ENCODE measurements at regions of chr12 and their contacts with region 1.

Region 1: GRCh38 chr12:26188127-26188526 is 7.2 kb upstream of the SSPN start:
- DNase-seq: no peak
- H3K4me3 Mint-ChIP-seq: no peak overlapping the region
- H3K27ac Mint-ChIP-seq: peak overlapping the region; percentile 38
- H3K4me1 Mint-ChIP-seq: peaks cover 38% of the 10 kb centered on the region
- H3K27me3 Mint-ChIP-seq: no peaks in the 10 kb centered on the region
- CTCF ChIP-seq: no peak

Region 2: DNA sequence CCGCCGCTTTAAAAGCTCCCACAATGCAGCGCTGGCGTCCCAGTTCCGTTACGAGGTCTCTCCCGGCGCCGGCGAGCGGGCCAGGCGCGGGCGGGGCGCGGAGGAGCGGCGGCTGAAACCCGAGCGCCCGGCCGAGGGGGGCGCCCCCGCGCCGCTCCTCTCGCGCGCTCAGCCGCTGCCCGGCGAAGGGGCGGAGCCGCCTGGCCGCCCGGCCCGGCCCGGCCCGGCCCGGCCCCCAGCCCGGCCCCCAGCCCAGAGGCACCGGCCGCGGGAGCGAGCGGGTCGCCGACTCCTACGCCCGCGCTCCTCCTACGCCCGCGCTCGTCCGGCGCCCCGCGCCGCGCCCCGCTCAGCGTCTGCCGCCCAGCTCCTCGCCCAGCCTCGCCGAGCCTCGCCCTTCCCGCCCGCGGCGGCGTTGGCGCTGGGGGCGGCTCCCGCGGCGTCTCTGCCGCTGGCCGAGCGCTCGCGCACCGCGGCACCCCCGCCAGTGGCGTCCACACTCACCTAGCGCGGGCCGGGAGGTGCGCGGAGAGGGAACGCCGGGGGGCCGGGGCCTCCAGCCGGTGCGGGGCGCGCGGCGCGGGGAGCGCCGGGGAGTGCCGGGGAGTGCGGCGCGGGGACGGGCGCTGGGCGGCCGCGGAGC is 229.6 kb before region 1 on chr12 and contains the start of gene RASSF8:
- CTCF ChIA-PET with region 1: no interaction called
- intact Hi-C with region 1: no loop called
- DNase-seq: peak; percentile 80
- H3K4me3 Mint-ChIP-seq: peak within 1 kb of the TSS; percentile 82
- H3K27ac Mint-ChIP-seq: peak within 1 kb of the TSS; percentile 56
- H3K4me1 Mint-ChIP-seq: peaks cover 25% of the 10 kb centered on the region
- H3K27me3 Mint-ChIP-seq: no peaks in the 10 kb centered on the region
- CTCF ChIP-seq: no peak
- total RNA-seq, gene RASSF8: 17.4 and 26.6 TPM in 2 replicates

Region 3: GRCh38 chr12:26126340-26127284 is 61.5 kb before region 1 on chr12:
- CTCF ChIA-PET with region 1: interaction called, 4 read pairs
- intact Hi-C with region 1: loop called (anchors 5 kb)
- DNase-seq: peak; percentile 86
- H3K4me3 Mint-ChIP-seq: peak overlapping the region; percentile 79
- H3K27ac Mint-ChIP-seq: peak overlapping the region; percentile 92
- H3K4me1 Mint-ChIP-seq: peaks cover 21% of the 10 kb centered on the region
- H3K27me3 Mint-ChIP-seq: peaks cover 18% of the 10 kb centered on the region
- CTCF ChIP-seq: no peak

Region 4: DNA sequence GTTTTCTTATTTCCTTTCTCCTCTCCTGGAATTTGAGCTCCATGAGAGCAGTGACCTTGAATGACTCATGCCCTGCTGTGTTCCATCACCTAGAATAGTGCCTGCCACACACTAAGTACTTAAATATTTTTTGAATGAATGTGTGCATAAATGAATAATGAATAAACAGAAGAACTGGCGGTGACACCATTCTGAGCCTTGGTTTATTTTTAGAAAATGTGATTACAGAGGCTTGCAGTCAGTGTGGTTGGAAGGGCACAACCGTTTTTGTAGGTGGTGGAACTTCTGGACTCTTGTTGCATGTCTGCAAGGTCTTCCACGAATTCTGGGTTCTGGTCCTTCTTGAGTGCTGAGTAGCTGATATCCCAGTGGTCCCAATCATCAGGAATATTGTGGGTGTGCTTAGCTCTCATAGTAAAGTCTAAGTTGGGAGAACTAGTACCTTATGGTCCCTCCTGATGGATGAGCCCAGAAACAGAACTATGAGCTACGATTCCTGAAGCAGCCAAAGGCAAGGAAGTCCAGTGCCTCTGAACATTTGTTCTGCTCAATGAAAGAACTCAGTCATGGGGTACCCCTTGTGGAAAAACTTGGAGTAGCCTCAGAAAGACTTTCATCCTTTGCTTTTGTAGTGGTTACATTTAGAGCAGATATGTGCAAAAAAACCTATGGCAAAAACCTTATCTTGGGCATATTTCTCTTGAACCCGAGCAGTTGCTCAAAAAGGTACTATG is 34.5 kb before region 1 on chr12:
- CTCF ChIA-PET with region 1: no interaction called
- intact Hi-C with region 1: loop called (anchors 5 kb)
- DNase-seq: peak; percentile 49
- H3K4me3 Mint-ChIP-seq: no peak overlapping the region
- H3K27ac Mint-ChIP-seq: peak overlapping the region; percentile 6
- H3K4me1 Mint-ChIP-seq: peaks cover 52% of the 10 kb centered on the region
- H3K27me3 Mint-ChIP-seq: no peaks in the 10 kb centered on the region
- CTCF ChIP-seq: no peak

Region 5: GRCh38 chr12:26239122-26239851 is 51.2 kb after region 1 on chr12:
- CTCF ChIA-PET with region 1: interaction called, 3 read pairs
- intact Hi-C with region 1: loop called (anchors 5 kb)
- DNase-seq: peak; percentile 92
- H3K4me3 Mint-ChIP-seq: peak overlapping the region; percentile 24
- H3K27ac Mint-ChIP-seq: peak overlapping the region; percentile 92
- H3K4me1 Mint-ChIP-seq: peaks cover 59% of the 10 kb centered on the region
- H3K27me3 Mint-ChIP-seq: no peaks in the 10 kb centered on the region
- CTCF ChIP-seq: no peak

Region 6: GRCh38 chr12:26274441-26275312 is 86.5 kb after region 1 on chr12:
- CTCF ChIA-PET with region 1: no interaction called
- intact Hi-C with region 1: loop called (anchors 2 kb)
- DNase-seq: peak; percentile 84
- H3K4me3 Mint-ChIP-seq: peak overlapping the region; percentile 28
- H3K27ac Mint-ChIP-seq: peak overlapping the region; percentile 96
- H3K4me1 Mint-ChIP-seq: peaks cover 51% of the 10 kb centered on the region
- H3K27me3 Mint-ChIP-seq: no peaks in the 10 kb centered on the region
- CTCF ChIP-seq: no peak

Region 7: GRCh38 chr12:26402648-26403047 is 214.5 kb after region 1 on chr12:
- CTCF ChIA-PET with region 1: no interaction called
- intact Hi-C with region 1: loop called (anchors 5 kb)
- DNase-seq: peak; percentile 71
- H3K4me3 Mint-ChIP-seq: no peak overlapping the region
- H3K27ac Mint-ChIP-seq: no peak overlapping the region
- H3K4me1 Mint-ChIP-seq: no peaks in the 10 kb centered on the region
- H3K27me3 Mint-ChIP-seq: no peaks in the 10 kb centered on the region
- CTCF ChIP-seq: peak; percentile 48

Region 8: GRCh38 chr12:26465419-26466097 is 277.4 kb after region 1 on chr12:
- CTCF ChIA-PET with region 1: no interaction called
- intact Hi-C with region 1: no loop called
- DNase-seq: no peak
- H3K4me3 Mint-ChIP-seq: no peak overlapping the region
- H3K27ac Mint-ChIP-seq: no peak overlapping the region
- H3K4me1 Mint-ChIP-seq: no peaks in the 10 kb centered on the region
- H3K27me3 Mint-ChIP-seq: no peaks in the 10 kb centered on the region
- CTCF ChIP-seq: no peak